H1 (cell line): ENCODE measurements at regions of chr5 and their contacts with region 1.

Region 1: GRCh38 chr5:147410496-147411355 is 99.1 kb downstream of the DPYSL3 start:
- DNase-seq: no peak
- H3K4me3 ChIP-seq: no peak overlapping the region
- H3K27ac ChIP-seq: no peak overlapping the region
- H3K4me1 ChIP-seq: no peaks in the 10 kb centered on the region
- H3K27me3 ChIP-seq: no peaks in the 10 kb centered on the region
- CTCF ChIP-seq: no peak
- EP300 ChIP-seq: no peak
- POLR2A ChIP-seq: no peak
- RAD21 ChIP-seq: no peak

Region 2: DNA sequence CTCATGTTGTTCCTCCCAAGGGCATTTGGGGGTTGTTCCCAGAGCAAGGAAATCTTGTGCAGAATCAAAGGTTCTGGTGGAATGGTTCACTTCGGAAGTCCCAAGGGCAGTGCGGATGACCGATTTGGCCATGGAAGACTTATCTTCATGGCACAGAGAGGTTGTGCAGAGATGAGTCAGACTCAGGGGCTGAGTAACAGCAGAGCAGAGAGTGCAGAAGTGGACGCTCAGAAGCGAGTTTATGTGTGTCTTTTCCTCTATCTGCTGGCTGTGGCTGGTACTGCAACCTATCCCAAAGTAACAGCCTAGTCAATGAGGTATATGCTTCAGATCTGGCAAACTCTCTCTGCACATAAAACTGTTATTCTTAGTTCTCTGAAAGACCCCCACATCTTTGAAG is 18.9 kb before region 1 on chr5:
- CTCF ChIA-PET with region 1: interaction called, 23 read pairs
- POLR2A ChIA-PET with region 1: interaction called, 6 read pairs
- DNase-seq: no peak
- H3K4me3 ChIP-seq: no peak overlapping the region
- H3K27ac ChIP-seq: no peak overlapping the region
- H3K4me1 ChIP-seq: peaks cover 4 to 10% (median 8%) of the 10 kb centered on the region in 4 experiments; a peak in 5 of 7 replicates
- H3K27me3 ChIP-seq: no peaks in the 10 kb centered on the region; a peak in 1 of 7 replicates
- CTCF ChIP-seq: peak; percentile 2 to 67 (median 16); a peak in 3 of 4 replicates
- EP300 ChIP-seq: no peak
- POLR2A ChIP-seq: peak in 1 of 2 experiments; percentile 45; a peak in 1 of 3 replicates
- RAD21 ChIP-seq: peak; percentile 50 to 65

Region 3: GRCh38 chr5:147397616-147398015 is 13.1 kb before region 1 on chr5:
- CTCF ChIA-PET with region 1: interaction called, 23 read pairs
- POLR2A ChIA-PET with region 1: no interaction called
- DNase-seq: no peak
- H3K4me3 ChIP-seq: no peak overlapping the region
- H3K27ac ChIP-seq: no peak overlapping the region
- H3K4me1 ChIP-seq: no peaks in the 10 kb centered on the region
- H3K27me3 ChIP-seq: no peaks in the 10 kb centered on the region
- CTCF ChIP-seq: peak; percentile 28 to 61 (median 54)
- EP300 ChIP-seq: no peak
- POLR2A ChIP-seq: peak in 1 of 2 experiments; percentile 40; a peak in 1 of 3 replicates
- RAD21 ChIP-seq: peak; percentile 14 to 41; a peak in 2 of 4 replicates

Region 4: GRCh38 chr5:147427521-147428401 is 17.0 kb after region 1 on chr5:
- CTCF ChIA-PET with region 1: interaction called, 4 read pairs
- POLR2A ChIA-PET with region 1: interaction called, 10 read pairs
- DNase-seq: no peak
- H3K4me3 ChIP-seq: no peak overlapping the region
- H3K27ac ChIP-seq: 0 out of 2 replicates have a peak overlapping the region, but pooled peaks have one; percentile 29
- H3K4me1 ChIP-seq: peaks cover 5 to 17% (median 9%) of the 10 kb centered on the region in 4 experiments; a peak in 6 of 7 replicates
- H3K27me3 ChIP-seq: peaks cover 0 to 1% (median 0%) of the 10 kb centered on the region in 4 experiments; a peak in 1 of 7 replicates
- CTCF ChIP-seq: no peak
- EP300 ChIP-seq: no peak
- POLR2A ChIP-seq: no peak
- RAD21 ChIP-seq: no peak